H1 (cell line): ENCODE measurements at regions of chr13 and their contacts with region 1.

Region 1: DNA sequence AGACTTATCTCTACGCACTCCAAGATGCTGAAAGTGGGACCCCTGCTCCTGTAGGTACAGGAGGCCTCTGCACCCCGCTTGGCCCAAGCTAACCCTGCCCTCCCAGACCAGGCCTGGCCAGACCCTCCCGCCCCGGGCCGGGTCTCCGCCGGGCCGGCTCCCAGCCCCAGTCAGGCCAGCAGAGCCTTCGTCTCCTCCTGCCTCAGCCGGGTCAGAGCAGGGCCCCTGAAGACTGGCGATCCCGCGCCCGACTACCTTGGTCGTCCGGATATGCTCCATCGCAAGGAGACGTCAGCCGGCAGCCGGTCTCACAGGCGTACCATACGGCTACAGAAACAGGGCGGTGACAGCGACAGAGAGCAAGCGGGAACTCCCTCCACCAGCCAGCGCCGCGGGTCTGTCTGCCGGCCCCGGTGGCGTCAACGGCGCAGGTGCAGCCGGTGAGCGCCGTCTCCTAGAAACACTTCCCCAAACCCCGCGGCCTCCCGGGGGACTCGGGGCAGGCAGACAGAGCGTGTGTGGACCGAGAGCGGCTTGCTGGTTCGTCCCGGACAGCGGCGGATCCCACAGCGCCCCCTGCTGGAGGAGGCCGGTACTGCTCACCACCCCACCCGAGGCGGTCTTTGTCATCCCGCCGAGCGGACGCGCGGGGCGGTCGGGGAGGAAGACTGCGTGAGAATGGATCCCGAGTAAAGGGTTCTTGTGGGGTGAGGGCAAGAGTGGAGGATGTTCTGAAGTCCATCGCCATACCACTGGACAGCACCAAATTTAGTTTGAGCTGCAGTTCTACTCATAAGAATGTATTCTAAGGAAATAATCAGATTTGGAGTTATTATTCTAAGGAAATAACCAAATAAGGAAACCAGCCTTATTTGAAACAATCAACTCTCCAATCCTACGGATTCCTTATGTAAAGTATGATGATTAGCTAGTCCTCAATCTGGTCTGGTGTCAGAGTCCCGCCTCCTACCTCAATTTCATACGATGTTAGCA is at the start of gene MTMR6:
- DNase-seq: peak; percentile 63 to 99
- H3K4me3 ChIP-seq: peak within 1 kb of the TSS; percentile 54 to 90 (median 77)
- H3K27ac ChIP-seq: no peak within 1 kb of the TSS
- H3K4me1 ChIP-seq: no peaks in the 10 kb centered on the region
- H3K27me3 ChIP-seq: peaks cover 0 to 3% (median 0%) of the 10 kb centered on the region in 4 experiments; a peak in 1 of 7 replicates
- CTCF ChIP-seq: peak; percentile 70 to 95 (median 91)
- EP300 ChIP-seq: no peak
- POLR2A ChIP-seq: peak in 1 of 2 experiments; percentile 56; a peak in 1 of 3 replicates
- RAD21 ChIP-seq: peak; percentile 57 to 59
- total RNA-seq, gene MTMR6: 6.9 and 8.4 TPM in 2 replicates

Region 2: DNA sequence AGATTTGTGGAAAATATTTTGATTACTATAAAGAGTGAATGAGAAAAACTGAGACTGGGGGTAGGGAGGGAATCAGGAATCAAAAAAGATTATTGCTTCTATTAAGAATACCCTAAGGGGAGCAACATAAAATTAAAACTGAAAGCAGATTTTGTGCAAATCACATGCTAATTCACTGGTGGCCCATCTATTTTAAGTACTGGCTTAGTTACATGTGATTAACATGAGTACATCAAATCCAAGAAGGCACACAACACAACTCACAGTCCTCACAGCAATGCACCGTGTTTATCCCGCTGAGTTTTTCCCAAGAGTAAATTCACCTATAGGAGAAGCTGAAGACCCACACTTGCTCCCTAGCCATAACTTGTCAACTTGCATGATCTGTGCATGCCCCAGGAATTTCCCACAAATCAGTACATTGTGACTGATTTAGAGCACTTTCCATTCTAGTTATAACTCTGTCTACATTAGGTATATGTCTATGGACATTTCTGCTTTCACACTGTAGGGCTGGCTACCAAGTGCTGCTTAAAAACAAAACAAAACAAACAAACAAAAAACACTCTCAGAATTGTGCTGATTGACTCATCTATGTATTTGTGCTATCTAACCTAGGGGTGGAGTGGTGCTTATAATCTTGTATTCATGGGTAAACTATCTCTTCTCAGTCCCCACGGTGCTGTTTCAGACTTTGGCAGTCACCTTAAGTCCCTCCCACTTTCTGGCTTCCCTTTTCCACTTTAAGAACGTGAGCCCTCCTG is 139.4 kb before region 1 on chr13:
- CTCF ChIA-PET with region 1: no interaction called
- POLR2A ChIA-PET with region 1: no interaction called
- DNase-seq: no peak
- H3K4me3 ChIP-seq: no peak overlapping the region
- H3K27ac ChIP-seq: no peak overlapping the region
- H3K4me1 ChIP-seq: peaks cover 0 to 8% (median 5%) of the 10 kb centered on the region in 4 experiments; a peak in 6 of 7 replicates
- H3K27me3 ChIP-seq: no peaks in the 10 kb centered on the region
- CTCF ChIP-seq: no peak
- EP300 ChIP-seq: no peak
- POLR2A ChIP-seq: no peak
- RAD21 ChIP-seq: no peak

Region 3: GRCh38 chr13:25276748-25277147 is 10.5 kb before region 1 on chr13:
- CTCF ChIA-PET with region 1: interaction called, 13 read pairs
- POLR2A ChIA-PET with region 1: interaction called, 4 read pairs
- DNase-seq: no peak
- H3K4me3 ChIP-seq: no peak overlapping the region
- H3K27ac ChIP-seq: no peak overlapping the region
- H3K4me1 ChIP-seq: no peaks in the 10 kb centered on the region
- H3K27me3 ChIP-seq: no peaks in the 10 kb centered on the region
- CTCF ChIP-seq: no peak
- EP300 ChIP-seq: no peak
- POLR2A ChIP-seq: no peak
- RAD21 ChIP-seq: no peak